Posterior vena cava (tissue), 2 donors: ENCODE measurements at regions of chr20 and their contacts with region 1.

Region 1: DNA sequence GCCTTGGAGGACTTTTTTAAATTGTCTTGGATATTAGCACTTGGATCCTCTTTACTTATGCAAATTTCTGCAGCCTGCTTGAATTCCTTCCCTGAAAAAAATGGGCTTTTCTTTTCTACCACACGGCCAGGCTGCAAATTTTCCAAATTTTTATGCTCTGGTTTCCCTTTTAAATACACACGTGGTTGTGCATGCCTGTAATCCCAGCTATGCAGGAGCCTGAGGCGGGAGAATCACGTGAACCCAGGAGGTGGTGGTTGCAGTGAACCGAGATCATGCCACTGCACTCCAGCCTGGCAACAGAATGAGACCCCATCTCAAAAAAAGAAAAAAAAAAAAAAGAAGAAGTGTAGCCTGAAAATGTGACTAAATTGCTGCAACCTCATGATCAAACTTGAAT is 76.1 kb upstream of the PRND start:
- DNase-seq: no peak

Region 2: DNA sequence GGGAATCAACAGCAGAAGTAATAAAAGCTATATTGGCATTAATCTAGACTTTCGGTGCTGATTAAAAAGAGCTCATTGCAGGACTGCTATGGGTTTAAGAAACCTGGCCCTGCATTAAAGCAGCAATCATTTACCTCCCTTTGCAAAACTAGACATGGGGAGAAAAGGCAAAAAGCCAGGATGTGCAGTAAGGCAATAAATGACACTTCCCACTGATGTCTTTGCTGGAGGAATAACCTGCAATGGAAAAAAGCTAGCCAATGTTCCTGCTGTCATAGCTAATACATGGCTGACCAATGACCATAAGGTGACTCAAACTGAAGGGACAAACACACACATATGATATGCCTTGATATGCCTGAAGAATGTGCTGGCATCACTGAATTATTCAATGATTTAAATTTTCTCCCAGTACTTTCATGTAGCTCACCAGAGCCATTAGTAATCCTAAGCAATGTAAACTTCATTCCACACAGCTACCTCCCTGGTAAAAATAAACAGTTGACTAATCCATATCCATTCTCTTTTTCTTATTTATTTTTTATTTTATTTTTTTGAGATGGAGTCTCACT is 1246.9 kb before region 1 on chr20:
- intact Hi-C with region 1: no loop called
- DNase-seq: no peak

Region 3: GRCh38 chr20:4613718-4614620 is 31.7 kb before region 1 on chr20:
- intact Hi-C with region 1: loop called in 1 of 2 experiments (anchors 1 kb)
- DNase-seq: no peak